ENCODE measurements at regions of chr6 and their contacts with region 1.

Region 1: GRCh38 chr6:27452496-27452897 is 20.4 kb downstream of the ZNF184 start:
- DNase-seq: peak; percentile 5
- ATAC-seq: no peak
- H3K4me3 ChIP-seq: no peak overlapping the region
- H3K27ac ChIP-seq: no peak overlapping the region
- H3K4me1 ChIP-seq: no peaks in the 10 kb centered on the region
- H3K27me3 ChIP-seq: no peaks in the 10 kb centered on the region
- CTCF ChIP-seq: no peak
- POLR2A ChIP-seq: no peak
- RAD21 ChIP-seq: no peak

Region 2: DNA sequence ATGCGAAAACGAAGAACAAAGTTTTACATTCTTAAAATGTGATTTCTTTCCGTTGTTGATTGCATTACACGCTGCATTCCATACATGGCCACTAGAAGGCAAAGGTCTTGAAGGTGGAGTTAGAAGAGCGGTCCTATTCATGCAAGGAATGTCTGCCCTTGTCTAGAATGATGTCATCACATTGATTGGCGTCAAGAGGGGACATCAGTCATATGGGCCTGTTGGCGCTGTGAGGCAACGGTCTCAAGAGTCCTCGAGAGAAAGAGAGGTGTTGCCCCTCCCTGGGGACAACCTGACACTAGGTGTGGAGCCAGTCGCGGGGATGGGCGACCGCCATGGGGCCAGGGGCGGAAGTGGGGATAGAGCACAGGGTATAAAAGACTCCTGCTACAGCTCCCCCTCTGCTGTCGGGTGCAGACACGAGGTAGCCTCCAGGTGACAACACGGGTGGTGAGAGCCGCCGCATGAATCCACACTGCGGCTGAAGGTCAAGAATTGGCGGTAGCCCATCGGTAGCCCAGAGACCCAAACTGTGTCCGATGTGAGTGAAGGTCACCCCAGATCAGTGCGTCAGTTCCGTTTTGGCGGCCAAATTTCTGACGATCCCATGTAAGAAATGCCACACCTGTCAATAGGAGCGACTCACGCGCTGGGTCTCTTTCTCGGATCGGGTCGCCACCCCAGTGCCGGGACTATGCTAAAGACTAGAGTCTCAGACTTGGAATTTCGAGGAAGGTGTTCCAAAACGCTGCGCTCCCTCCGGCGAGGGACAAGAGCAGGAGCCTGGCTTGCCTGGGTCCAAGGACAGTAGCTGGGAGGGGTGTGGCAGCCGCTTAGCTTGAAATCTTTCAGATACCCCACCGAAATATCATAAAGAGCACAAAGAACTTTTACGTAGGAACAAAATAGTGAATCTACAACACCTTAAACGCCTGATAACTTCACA is 113.6 kb after region 1 on chr6:
- CTCF ChIA-PET with region 1: no interaction called
- POLR2A ChIA-PET with region 1: interaction called, 13 read pairs
- dilution Hi-C with region 1: no loop called
- in situ Hi-C with region 1: no loop called
- intact Hi-C with region 1: no loop called
- DNase-seq: no peak
- ATAC-seq: no peak
- H3K4me3 ChIP-seq: no peak overlapping the region
- H3K27ac ChIP-seq: no peak overlapping the region
- H3K4me1 ChIP-seq: no peaks in the 10 kb centered on the region
- H3K27me3 ChIP-seq: peaks cover 6% of the 10 kb centered on the region; the same call in 1 of the 2 replicates
- CTCF ChIP-seq: no peak
- POLR2A ChIP-seq: no peak
- RAD21 ChIP-seq: no peak